Dorsolateral prefrontal cortex (tissue), 120 donors: ENCODE measurements at regions of chr18 and their contacts with region 1.

Region 1: GRCh38 chr18:79246348-79247108 is 149.2 kb upstream of the NFATC1 start:
- DNase-seq: peak; percentile 58 to 88 (median 76)
- H3K4me3 ChIP-seq: peak overlapping the region in 48 of 59 donors; percentile 8 to 52 (median 32)
- H3K27ac ChIP-seq: peak overlapping the region in 25 of 59 donors; percentile 8 to 74 (median 42)
- H3K27me3 ChIP-seq: no peaks in the 10 kb centered on the region
- CTCF ChIP-seq: peak; percentile 78 to 97 (median 91)

Region 2: GRCh38 chr18:78754311-78755043 is 492.1 kb before region 1 on chr18:
- intact Hi-C with region 1: no loop called
- DNase-seq: peak in 2 of 10 donors; percentile 20 to 30
- H3K4me3 ChIP-seq: no peak overlapping the region
- H3K27ac ChIP-seq: no peak overlapping the region
- H3K27me3 ChIP-seq: no peaks in the 10 kb centered on the region
- CTCF ChIP-seq: no peak

Region 3: GRCh38 chr18:78875268-78875997 is 371.1 kb before region 1 on chr18:
- intact Hi-C with region 1: loop called in 1 of 2 experiments (anchors 10 kb)
- DNase-seq: peak in 3 of 10 donors; percentile 24 to 51 (median 40)
- H3K4me3 ChIP-seq: no peak overlapping the region
- H3K27ac ChIP-seq: no peak overlapping the region
- H3K27me3 ChIP-seq: peaks cover 0 to 9% (median 0%) of the 10 kb centered on the region in 45 donors
- CTCF ChIP-seq: peak in 54 of 56 donors; percentile 12 to 65 (median 46)

Region 4: DNA sequence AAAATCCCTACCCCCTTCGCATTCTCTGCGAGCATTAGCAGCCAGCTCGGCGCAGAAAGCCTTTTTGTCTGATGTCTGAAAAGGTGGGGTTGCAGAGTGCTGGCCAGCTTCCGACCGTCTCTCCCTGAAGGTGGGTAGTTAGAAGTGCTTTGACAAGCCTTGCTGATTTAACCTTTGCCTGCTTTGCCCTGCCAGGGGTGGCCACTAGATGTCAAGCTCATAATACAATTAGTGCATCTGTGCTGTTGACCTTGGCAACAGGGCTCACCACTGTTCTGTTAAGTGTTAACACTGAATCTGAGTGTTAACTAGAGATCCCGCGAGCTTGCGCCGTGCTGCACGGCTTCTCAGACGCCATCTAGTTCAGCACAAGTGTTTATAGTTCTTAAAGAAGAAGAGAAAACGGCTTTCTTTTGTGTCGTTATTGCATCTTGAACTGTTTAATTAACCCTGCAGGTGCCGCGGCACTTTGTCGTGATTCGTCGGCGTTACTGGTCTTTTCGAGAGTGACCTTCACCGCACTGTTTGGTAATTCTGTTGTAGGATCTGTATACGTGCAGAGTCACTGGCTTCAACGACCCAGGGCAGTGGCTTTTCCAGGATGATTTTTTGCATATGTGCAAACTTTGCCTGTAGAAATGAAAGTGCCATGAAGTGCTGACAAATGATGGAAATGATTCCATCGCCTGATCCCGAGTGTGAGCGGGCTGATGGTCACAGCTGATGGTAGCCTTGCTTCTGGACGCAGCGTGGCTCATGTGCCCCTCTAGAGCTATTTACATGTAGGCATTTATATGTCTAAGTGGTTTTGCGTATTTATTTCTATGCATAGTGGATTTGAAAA is 261.4 kb before region 1 on chr18:
- intact Hi-C with region 1: loop called in 1 of 2 experiments (anchors 10 kb)
- DNase-seq: peak in 2 of 10 donors; percentile 18 to 36
- H3K4me3 ChIP-seq: peak overlapping the region in 46 of 59 donors; percentile 1 to 53 (median 30)
- H3K27ac ChIP-seq: peak overlapping the region in 34 of 59 donors; percentile 1 to 70 (median 25)
- H3K27me3 ChIP-seq: peaks cover 8 to 100% (median 82%) of the 10 kb centered on the region in 45 donors
- CTCF ChIP-seq: peak in 11 of 56 donors; percentile 9 to 19 (median 12)

Region 5: GRCh38 chr18:79068937-79069791 is 177.4 kb before region 1 on chr18 and contains the start of gene ATP9B:
- intact Hi-C with region 1: loop called in 1 of 2 experiments (anchors 5 kb)
- DNase-seq: peak; percentile 94 to 99 (median 98)
- H3K4me3 ChIP-seq: peak within 1 kb of the TSS; percentile 48 to 100 (median 97)
- H3K27ac ChIP-seq: peak within 1 kb of the TSS; percentile 40 to 98 (median 94)
- H3K27me3 ChIP-seq: no peaks in the 10 kb centered on the region
- CTCF ChIP-seq: peak in 49 of 56 donors; percentile 4 to 62 (median 37)
- total RNA-seq, gene ATP9B: 67.5 to 145 (median 97.7) TPM

Region 6: DNA sequence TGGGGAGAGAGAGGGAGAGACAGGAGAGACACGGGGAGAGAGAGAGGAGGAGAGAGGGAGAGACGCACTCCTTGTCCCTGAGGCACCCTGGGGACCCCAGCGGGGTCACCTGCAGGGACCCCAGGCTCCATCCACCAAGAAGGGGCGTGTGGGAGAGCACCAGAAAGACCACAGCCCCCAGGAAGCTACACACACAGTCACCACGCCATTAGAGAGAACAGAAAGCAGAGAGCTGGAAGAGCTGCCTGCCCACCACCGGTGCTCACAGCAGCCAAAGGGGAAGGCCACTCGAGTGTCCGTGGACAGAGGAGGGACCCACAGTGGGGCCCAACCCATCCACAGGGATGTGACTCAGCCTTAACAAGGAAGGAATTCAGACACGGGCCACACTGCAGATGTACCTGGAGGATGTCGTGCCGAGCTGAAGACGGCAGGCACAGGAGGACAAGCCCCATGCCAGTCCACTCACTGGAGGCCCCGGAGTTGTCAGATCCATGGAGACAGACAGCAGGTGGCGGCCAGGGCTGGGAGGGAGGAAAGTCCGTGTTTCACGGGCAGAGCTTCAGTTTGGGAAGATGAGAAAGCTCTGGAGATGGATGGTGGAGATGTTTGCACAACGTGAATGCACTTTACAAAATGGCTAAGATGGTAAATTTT is 137.8 kb after region 1 on chr18:
- intact Hi-C with region 1: no loop called
- DNase-seq: peak in 3 of 10 donors; percentile 25 to 35 (median 33)
- H3K4me3 ChIP-seq: no peak overlapping the region
- H3K27ac ChIP-seq: no peak overlapping the region
- H3K27me3 ChIP-seq: peaks cover 0 to 34% (median 4%) of the 10 kb centered on the region in 45 donors
- CTCF ChIP-seq: no peak

Region 7: GRCh38 chr18:79439201-79440023 is 192.9 kb after region 1 on chr18:
- intact Hi-C with region 1: no loop called
- DNase-seq: no peak
- H3K4me3 ChIP-seq: no peak overlapping the region
- H3K27ac ChIP-seq: no peak overlapping the region
- H3K27me3 ChIP-seq: peaks cover 0 to 4% (median 0%) of the 10 kb centered on the region in 45 donors
- CTCF ChIP-seq: no peak

Region 8: GRCh38 chr18:80200171-80200931 is 953.8 kb after region 1 on chr18:
- intact Hi-C with region 1: no loop called
- DNase-seq: peak; percentile 10 to 78 (median 70)
- H3K4me3 ChIP-seq: peak overlapping the region in 17 of 59 donors; percentile 7 to 39 (median 22)
- H3K27ac ChIP-seq: peak overlapping the region in 58 of 59 donors; percentile 8 to 90 (median 76)
- H3K27me3 ChIP-seq: no peaks in the 10 kb centered on the region
- CTCF ChIP-seq: peak in 55 of 56 donors; percentile 25 to 79 (median 57)